Psoas muscle (tissue), 8 donors: ENCODE measurements at regions of chr4 and their contacts with region 1.

Region 1: DNA sequence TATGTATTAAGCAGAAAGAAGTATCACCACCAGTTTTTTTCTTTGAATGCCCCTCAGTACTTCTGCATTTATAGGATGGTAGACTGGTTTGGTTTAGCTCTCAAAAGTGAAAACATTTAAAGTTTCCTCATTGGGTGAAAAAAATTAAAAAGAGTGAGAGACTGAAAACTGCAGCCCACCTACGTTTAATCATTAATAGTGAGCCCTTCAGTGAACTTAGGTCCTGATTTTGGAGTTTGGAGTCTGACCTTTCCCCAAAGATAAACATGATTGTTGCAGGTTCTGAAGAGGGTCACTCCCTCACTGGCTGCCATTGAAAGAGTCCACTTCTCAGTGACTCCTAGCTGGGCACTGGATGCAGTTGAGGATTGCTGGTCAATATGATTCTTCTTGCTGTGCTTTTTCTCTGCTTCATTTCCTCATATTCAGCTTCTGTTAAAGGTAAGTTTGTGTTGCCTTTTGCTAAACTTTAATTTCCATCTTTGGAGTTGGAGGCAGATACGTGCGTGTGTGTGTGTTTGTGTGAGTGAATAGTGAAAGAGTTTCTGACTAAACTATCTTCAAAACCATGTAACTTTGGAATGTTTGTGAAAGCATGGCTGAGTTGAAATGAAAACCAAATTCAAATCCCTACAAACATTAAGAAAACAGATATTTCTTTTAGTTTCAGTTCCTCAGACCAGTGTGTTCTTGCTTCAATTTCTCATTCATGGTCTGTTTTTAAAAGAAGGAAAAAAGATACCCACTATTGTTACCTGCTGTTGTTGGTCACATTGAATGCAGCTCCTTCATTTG is at the start of gene MTTP:
- DNase-seq: no peak
- ATAC-seq: no peak
- H3K4me3 ChIP-seq: peak within 1 kb of the TSS; percentile 5
- H3K27ac ChIP-seq: peak within 1 kb of the TSS; percentile 57
- H3K4me1 ChIP-seq: peaks cover 14% of the 10 kb centered on the region
- H3K27me3 ChIP-seq: no peaks in the 10 kb centered on the region
- CTCF ChIP-seq: no peak
- total RNA-seq, gene MTTP: 0.07 to 0.99 (median 0.39) TPM

Region 2: DNA sequence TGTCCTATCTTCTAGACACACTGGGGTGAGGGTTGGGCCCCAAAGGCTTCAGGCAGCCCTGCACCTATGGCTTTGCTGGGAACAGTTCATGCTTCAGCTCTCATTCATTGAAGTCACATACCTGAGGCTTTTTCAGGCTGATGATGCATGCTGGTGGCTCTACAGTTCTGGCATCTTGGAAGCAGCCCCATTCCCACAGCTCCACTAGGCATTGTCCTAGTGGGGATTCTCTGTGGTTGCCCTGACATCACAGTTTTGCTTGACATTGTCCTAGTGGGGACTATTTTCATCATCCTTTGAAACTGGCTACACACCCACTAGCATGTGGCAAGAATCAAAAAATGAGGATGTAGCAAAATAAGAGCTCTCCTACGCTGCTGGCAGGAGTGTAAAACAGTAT is 101.6 kb before region 1 on chr4:
- intact Hi-C with region 1: no loop called
- DNase-seq: no peak
- ATAC-seq: no peak
- H3K4me3 ChIP-seq: no peak overlapping the region
- H3K27ac ChIP-seq: no peak overlapping the region
- H3K4me1 ChIP-seq: no peaks in the 10 kb centered on the region
- H3K27me3 ChIP-seq: no peaks in the 10 kb centered on the region
- CTCF ChIP-seq: no peak

Region 3: DNA sequence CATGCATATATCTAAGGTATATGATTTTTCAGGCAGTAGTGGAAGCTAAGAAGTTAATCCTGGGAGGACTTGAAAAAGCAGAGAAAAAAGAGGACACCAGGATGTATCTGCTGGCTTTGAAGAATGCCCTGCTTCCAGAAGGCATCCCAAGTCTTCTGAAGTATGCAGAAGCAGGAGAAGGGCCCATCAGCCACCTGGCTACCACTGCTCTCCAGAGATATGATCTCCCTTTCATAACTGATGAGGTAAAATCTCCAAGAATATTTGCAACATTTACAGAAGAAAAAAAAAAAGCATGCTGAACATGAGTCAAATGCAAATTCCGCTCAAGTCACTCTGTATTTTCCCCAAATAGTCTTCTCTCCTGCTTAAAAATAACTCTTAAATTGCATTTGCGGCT is 32.0 kb after region 1 on chr4:
- intact Hi-C with region 1: loop called in 1 of 2 experiments (anchors 5 kb)
- DNase-seq: no peak
- ATAC-seq: no peak
- H3K4me3 ChIP-seq: no peak overlapping the region
- H3K27ac ChIP-seq: no peak overlapping the region
- H3K4me1 ChIP-seq: peaks cover 12% of the 10 kb centered on the region
- H3K27me3 ChIP-seq: no peaks in the 10 kb centered on the region
- CTCF ChIP-seq: no peak

Region 4: GRCh38 chr4:99624141-99624719 is 49.5 kb after region 1 on chr4:
- intact Hi-C with region 1: loop called in 1 of 2 experiments (anchors 5 kb)
- DNase-seq: no peak
- ATAC-seq: no peak
- H3K4me3 ChIP-seq: no peak overlapping the region
- H3K27ac ChIP-seq: no peak overlapping the region
- H3K4me1 ChIP-seq: no peaks in the 10 kb centered on the region
- H3K27me3 ChIP-seq: no peaks in the 10 kb centered on the region
- CTCF ChIP-seq: no peak